ENCODE measurements at regions of chr15 and their contacts with region 1.

Region 1: DNA sequence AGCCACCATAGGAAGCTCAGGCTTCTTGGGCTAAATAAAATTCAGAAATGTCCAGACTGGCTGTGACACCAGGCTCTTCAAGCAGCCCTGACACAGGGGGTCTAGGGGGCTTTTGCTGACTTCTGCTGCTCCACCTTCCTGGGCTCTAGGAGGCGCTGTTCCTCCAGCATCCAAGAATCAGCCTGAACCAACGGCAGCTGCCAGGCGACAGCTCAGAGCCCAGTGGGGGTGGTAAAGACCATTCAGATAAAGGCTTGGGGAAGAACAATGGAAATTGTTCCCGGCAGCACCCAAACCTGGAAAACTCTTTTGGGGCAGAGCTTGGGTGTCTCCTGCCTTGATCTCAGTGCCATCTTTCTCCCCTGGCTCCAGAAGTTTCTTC is 21.6 kb upstream of the PSTPIP1 start:
- DNase-seq: peak; percentile 66
- CTCF ChIP-seq: peak; percentile 65

Region 2: DNA sequence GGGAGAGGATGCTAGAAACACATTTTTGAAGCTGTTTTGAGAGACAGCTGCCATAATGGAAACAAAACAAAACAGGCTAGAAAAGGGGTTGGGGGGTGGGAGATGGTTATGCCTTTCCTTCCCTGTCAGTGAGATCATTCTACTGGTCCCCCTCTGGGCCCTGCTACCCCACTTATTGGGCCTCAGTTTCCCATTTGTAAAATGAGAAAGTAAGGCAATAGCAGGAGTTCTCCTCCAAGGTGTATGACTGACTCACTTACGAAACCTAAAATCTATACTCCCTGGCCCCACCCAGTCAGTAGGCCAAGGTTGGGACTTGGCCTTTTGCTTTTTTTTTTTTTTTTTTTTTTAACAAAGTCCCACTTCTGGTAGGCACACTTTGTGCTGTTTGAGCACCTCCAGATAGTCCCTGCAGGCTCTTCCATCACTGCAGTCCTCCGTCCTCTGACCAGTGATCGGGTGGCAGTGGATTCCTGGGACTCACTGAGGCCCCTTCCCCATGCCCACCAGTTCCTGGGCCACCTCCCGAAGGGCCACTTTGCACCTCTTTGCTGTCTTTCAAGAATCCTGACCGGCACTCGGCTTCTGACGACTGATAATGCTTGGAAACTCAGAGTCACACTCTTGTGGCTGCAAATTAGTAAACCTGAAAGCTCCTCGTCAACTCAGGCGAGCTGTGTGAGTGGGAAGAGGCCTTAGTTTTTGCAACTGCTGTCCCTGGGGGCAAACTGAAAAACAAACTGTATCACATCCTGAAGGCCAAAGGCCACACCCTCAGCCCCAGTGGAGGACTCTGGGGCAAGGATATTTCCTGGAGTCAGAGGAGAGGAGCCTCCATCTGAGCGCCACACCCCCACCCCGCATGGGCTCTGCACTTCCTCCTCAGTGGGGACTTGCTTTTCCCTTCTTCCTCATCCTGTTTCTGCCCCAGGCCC is 14.8 kb after region 1 on chr15:
- CTCF ChIA-PET with region 1: interaction called, 21 read pairs
- POLR2A ChIA-PET with region 1: interaction called, 5 read pairs
- DNase-seq: peak; percentile 84
- CTCF ChIP-seq: no peak

Region 3: DNA sequence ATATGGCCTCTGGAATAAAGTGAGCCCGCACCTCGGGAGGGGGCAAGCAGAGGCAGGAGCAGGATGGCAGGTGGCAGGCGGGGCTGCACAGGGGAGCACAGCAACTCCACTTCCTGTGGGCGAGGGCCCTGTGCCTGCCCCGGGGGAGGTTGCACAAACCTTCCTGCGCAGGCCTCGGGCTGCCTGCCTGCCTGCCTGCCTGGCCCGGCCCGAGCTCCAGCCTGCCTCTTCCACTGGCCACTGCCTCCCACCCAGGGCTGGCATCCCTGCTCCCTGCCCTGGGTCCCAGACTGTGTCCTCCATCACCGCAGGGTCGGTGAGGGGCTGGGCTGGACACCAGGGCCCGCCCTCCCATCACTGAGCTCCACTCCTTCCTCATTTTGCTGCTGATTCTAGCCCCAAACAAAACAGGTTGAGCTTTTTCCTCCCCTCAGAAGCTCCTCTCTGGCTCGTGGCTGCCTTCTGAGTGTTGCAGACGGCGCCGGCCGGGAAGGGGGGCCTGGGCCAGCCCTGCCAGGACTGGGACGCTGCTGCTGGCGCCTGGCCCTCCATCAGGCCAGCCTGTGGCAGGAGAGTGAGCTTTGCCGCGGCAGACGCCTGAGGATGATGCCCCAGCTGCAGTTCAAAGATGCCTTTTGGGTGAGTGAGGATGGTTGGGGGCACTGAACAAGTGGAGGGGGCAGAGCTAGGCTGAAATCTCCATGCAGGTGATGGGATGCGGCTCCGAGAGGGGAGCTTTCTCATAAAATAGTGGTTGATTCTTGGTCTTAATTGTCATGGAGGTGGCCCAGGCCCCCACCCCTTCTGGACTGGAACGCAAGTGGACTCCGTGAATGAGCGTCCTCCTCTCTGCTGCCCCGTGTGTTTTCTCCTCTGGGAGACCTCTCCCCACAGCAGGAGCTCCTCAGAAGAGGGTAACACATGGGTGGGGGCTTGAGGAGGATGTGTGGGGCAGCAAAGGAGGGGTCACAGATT is 21.9 kb after region 1 on chr15 and contains the start of gene PSTPIP1:
- CTCF ChIA-PET with region 1: interaction called, 10 read pairs
- POLR2A ChIA-PET with region 1: no interaction called
- DNase-seq: peak; percentile 64
- CTCF ChIP-seq: no peak

Region 4: GRCh38 chr15:77034695-77035489 is 61.5 kb after region 1 on chr15:
- CTCF ChIA-PET with region 1: interaction called, 88 read pairs
- POLR2A ChIA-PET with region 1: no interaction called
- DNase-seq: no peak
- CTCF ChIP-seq: peak; percentile 69

Region 5: DNA sequence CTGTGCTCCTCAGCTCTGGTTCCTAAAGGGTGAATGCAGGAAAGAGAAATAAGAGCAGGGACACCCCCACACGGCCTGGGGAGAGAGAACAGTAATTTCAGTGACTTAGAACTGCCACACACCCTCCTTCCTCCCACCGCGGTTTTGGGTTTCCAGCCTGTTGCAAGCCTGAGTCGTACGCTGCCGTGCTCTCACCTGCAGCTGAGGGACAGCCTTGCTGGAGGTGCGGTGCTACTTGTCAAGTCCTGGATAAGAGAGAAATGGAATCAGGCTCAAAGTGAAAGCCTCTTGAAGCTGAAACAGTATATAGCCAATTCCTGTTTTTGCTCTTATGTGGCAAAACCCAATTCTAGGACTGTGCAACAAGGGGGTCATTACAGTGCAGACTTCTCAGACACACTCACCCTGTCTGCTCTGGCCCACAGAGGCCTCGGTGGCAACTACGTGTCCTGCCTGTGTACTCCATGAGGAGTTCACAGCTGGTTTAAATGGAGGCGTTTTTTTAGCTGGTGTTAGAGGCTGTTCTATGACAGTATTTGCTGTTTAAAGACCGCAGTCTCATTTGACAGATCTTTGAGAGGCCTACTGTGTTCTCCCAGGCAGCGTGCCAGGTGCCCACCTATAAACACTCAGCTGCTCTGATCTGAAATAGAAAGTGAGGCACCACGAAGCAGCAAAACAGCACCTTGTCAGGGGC is 1061.3 kb after region 1 on chr15:
- CTCF ChIA-PET with region 1: no interaction called
- POLR2A ChIA-PET with region 1: no interaction called
- DNase-seq: peak; percentile 56
- CTCF ChIP-seq: no peak

Measured in GM10248 (cell line).